Left lung (tissue), 14 donors: ENCODE measurements at regions of chrX and their contacts with region 1.

Region 1: DNA sequence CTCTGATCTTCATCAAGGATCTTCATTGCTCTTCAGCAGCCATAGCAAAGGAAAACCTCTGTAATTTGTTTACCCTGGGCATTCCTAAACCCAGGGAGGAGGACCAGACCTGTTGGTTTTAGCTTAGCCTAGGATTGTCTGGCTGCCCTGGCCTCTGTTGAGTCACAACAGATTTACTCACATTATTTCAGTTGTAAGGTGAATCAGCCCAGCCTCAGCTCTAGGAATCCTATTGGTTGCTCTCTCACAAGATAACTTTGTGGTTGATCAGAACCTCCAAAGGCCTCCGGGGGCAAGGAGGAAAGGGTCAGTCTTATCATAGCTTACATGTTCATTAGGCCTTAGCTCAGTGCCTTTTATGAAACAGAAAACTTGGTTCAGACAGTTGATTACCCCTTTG is 41.0 kb downstream of the PDK3 start:
- DNase-seq: no peak
- ATAC-seq: no peak
- H3K4me3 ChIP-seq: no peak overlapping the region
- H3K27ac ChIP-seq: no peak overlapping the region
- H3K4me1 ChIP-seq: no peaks in the 10 kb centered on the region
- H3K27me3 ChIP-seq: peaks cover 0 to 3% of the 10 kb centered on the region in 2 donors
- CTCF ChIP-seq: no peak

Region 2: GRCh38 chrX:24100713-24101112 is 405.3 kb before region 1 on chrX:
- intact Hi-C with region 1: no loop called
- DNase-seq: no peak
- ATAC-seq: no peak
- H3K4me3 ChIP-seq: no peak overlapping the region
- H3K27ac ChIP-seq: no peak overlapping the region
- H3K4me1 ChIP-seq: no peaks in the 10 kb centered on the region
- H3K27me3 ChIP-seq: no peaks in the 10 kb centered on the region
- CTCF ChIP-seq: no peak

Region 3: DNA sequence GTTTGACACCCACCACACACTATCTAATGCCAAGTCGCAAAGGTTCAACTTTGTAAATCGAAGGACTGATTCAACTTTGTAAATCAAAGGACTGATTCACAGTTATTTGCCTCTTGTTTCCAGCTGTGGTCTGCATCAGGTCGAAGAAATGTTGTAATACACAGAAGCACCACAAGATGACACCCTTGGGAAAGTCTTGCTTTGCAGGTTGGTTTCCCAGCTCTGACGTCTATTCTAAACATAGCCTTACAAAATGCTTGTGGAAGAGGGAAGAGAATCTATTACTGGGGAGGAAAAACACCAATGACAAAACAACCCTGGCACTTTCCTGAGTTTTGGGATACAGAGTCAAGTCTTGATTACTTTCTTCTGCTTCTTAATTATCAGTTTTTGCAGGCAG is 110.3 kb before region 1 on chrX:
- intact Hi-C with region 1: loop called in 1 of 2 experiments (anchors 10 kb)
- DNase-seq: peak in 2 of 4 donors; percentile 60 to 76
- ATAC-seq: peak; percentile 97
- H3K4me3 ChIP-seq: no peak overlapping the region
- H3K27ac ChIP-seq: no peak overlapping the region
- H3K4me1 ChIP-seq: no peaks in the 10 kb centered on the region
- H3K27me3 ChIP-seq: peaks cover 0 to 5% of the 10 kb centered on the region in 2 donors
- CTCF ChIP-seq: peak; percentile 52 to 62